ENCODE measurements at regions of chr5 and their contacts with region 1.

Region 1: DNA sequence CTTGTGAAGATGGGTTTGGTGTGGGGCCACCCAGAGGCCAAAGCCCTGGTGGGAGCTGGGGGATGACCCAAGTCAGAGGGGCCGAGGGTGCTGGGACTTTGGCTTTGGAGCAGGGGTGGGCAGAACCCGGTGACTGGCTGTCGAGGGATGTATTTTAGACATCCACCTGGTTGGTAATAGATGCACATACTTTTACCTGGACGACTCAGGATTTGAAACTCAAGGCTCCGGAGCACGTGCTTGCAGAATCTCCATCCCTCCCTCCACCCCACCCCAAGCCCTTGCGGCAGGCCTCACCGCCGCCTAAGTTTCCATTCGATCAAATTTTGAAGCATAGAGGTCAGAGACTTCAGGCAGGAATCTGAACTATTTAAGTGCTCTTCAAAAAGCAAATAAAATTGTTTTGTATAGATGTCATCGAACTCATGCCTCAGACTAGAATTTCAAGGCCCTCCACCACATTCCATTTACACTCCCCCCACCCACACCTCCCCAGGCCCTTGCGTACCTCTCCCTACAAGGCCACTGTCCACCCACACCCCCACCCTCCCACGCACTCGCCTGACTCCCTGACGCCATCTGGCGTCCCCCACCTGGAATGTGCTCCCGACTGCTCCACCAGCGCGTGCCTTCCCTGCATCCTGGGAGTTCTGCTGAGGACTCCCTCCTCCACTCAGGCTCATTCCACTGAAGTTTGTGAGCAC is 56.6 kb upstream of the RPL26L1 start:
- DNase-seq: peak; percentile 98 to 99
- H3K4me3 ChIP-seq: no peak overlapping the region
- H3K27ac ChIP-seq: peak overlapping the region; percentile 93 to 99 (median 99)
- H3K4me1 ChIP-seq: peaks cover 43 to 66% of the 10 kb centered on the region in 2 donors
- H3K27me3 ChIP-seq: no peaks in the 10 kb centered on the region
- CTCF ChIP-seq: peak in 4 of 6 experiments; percentile 57 to 68 (median 64)
- POLR2A ChIP-seq: peak in 1 of 2 donors; percentile 58

Region 2: DNA sequence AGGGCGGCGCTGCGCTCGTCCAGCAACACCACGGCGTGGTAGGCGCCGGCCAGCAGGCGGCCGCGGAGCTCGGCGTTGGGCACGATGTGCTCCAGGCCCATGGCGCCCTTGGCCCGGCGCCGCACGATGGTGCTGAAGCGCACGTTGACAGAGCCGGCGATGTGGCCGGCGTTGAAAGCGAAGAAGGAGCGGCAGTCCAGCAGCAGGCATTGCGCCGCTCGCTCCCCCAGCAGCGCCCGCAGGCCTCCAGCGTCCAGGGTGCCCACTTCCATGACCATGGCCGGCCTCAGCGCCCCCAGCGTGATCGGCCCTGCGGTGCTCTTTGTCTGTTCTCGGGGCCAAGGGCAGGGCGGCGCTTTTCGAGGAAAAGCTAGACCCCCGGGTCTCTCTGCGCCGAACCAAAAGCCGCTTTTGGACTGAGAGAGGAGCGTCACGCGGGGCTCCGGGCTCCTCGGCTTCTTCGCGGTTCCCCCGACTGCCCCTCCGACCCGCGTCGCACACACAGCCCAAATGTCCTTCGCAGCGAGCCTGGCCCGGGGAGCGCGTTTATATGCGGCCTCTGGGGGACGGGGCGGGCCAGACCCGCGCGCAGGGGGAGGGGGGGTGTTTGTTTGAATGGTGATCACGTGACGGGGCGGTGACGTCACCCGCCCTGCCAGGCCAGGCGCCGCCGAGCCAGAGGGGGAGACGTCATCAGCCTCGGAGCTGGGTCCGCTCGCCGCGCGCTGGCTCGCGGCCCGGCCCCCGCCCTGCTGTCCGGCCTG is 131.8 kb before region 1 on chr5 and contains the start of gene DUSP1:
- intact Hi-C with region 1: loop called (anchors 5 kb)
- DNase-seq: peak; percentile 100
- H3K4me3 ChIP-seq: peak within 1 kb of the TSS; percentile 23 to 91 (median 82)
- H3K27ac ChIP-seq: peak within 1 kb of the TSS; percentile 99 to 100 (median 100)
- H3K4me1 ChIP-seq: peaks cover 29 to 38% of the 10 kb centered on the region in 2 donors
- H3K27me3 ChIP-seq: no peaks in the 10 kb centered on the region
- CTCF ChIP-seq: peak in 2 of 6 experiments; percentile 14 to 49
- POLR2A ChIP-seq: peak; percentile 100
- total RNA-seq, gene DUSP1: 613 to 1,025 (median 690) TPM

Region 3: GRCh38 chr5:172834415-172835289 is 68.0 kb before region 1 on chr5:
- intact Hi-C with region 1: no loop called
- DNase-seq: no peak
- H3K4me3 ChIP-seq: peak overlapping the region; percentile 64 to 92 (median 83)
- H3K27ac ChIP-seq: peak overlapping the region; percentile 84 to 93 (median 86)
- H3K4me1 ChIP-seq: peaks cover 27 to 43% of the 10 kb centered on the region in 2 donors
- H3K27me3 ChIP-seq: no peaks in the 10 kb centered on the region
- CTCF ChIP-seq: no peak
- POLR2A ChIP-seq: no peak

Region 4: DNA sequence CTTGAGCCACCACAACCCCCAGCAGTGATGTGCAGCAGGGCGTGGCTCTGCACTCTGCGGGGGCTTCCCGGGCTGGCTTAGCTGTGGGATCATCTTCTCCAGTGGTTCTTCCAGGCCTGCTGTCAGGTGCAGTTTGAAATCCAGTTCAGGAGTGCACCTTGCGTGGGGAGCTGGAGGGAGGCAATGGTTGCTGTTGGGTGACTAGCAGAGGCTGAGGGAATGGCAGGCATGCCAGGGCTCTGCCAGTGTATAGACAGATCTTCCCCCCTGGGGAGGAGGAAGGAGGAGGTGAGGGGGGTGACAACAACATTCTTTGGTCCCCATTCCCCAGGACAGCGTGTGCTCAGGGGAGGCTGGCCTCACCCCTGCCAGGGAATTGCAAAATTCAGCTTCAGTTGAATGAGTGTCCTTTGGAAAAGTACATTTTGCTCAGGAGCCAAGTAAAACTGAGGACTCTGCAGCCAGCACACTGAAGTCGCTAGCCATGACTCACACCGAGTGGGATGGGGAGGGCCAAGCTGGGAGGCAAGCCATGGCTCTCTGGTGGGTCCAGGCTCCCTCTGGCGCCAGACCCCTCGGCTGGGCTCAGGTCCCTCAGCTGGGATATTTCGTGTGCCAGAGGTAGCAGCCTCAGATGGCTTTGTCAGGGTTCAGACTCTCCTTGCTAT is 33.6 kb before region 1 on chr5:
- intact Hi-C with region 1: loop called (anchors 5 kb)
- DNase-seq: peak; percentile 94
- H3K4me3 ChIP-seq: no peak overlapping the region
- H3K27ac ChIP-seq: peak overlapping the region; percentile 97 to 98 (median 98)
- H3K4me1 ChIP-seq: peaks cover 95 to 96% of the 10 kb centered on the region in 2 donors
- H3K27me3 ChIP-seq: no peaks in the 10 kb centered on the region
- CTCF ChIP-seq: peak in 4 of 6 experiments; percentile 31 to 71 (median 46)
- POLR2A ChIP-seq: peak in 1 of 2 donors; percentile 77

Region 5: DNA sequence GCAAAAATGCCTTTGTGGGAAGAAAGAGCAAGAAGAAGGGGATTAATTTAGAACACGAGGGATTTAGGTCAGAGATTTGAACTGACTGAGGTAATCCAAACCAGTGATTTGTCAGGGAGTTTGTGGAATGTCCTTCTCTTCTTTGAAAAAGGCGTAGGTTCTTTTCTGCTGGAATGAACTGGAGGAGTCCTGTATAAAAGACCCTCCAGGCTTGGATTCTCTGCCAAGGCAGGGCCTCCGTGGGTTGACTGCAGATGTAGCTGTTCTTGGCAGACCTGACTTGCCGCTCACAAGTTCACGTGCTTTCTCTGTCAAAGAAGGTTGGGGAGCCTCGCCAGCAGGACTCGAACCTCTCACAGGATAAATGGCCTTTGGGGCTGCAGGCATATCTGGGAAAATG is 488.4 kb after region 1 on chr5:
- intact Hi-C with region 1: no loop called
- DNase-seq: no peak
- H3K4me3 ChIP-seq: no peak overlapping the region
- H3K27ac ChIP-seq: no peak overlapping the region
- H3K4me1 ChIP-seq: no peaks in the 10 kb centered on the region
- H3K27me3 ChIP-seq: no peaks in the 10 kb centered on the region
- CTCF ChIP-seq: no peak
- POLR2A ChIP-seq: no peak